CD14-positive monocyte (primary cell): ENCODE measurements at regions of chr1 and their contacts with region 1.

Region 1: DNA sequence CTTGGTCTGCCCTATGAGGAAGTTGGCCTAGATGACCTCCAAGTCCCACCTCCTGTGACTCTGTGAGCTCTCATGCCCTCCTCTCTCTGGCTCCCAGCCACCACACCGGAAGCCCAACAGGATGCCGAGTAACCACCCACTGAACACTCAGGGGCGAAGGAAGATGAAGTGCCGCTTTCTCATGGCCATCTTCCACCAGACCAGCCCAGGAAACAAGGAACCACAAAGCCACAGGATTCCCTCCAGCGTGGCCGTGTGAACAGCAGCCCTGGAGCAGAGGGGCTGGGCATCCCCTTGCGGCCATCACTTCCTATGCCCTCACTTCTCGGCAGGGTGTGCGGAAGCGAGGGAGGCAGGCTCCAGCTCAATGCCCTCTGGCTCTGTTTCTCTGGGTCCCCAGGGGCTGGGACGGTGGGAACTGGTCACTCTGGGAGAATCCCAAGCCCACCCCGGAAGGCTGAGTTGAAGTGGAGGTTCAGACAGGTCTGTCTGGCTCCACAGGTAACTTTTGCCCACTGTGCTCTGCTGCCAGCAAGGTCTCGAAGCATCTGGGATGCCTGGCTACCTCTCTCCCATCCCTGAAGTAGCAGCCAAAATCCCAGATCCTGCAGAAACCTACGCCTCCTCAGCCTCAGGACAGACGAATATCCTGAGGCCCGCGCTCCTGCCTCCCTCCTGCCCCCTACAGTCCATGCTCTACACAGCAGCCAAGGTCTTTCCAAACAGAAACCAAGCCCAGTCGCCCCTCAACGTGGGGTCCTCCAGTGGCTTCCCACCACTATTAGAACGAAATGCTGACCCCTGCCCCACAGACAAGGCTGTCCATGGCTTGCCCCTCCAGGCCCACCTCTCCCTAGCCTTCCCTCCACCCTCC is 44.2 kb upstream of the ECE1 start:
- DNase-seq: peak; percentile 97 to 99 (median 99)
- H3K4me3 ChIP-seq: peak overlapping the region; percentile 5 to 70 (median 35)
- H3K4me3 Mint-ChIP-seq: peak overlapping the region; percentile 84 to 88
- H3K27ac ChIP-seq: peak overlapping the region; percentile 88 to 90
- H3K27ac Mint-ChIP-seq: peak overlapping the region; percentile 96 to 100 (median 99)
- H3K4me1 ChIP-seq: peaks cover 77 to 82% of the 10 kb centered on the region in 2 donors
- H3K4me1 Mint-ChIP-seq: peaks cover 87% of the 10 kb centered on the region
- H3K27me3 ChIP-seq: peaks cover 0 to 20% of the 10 kb centered on the region in 2 donors
- H3K27me3 Mint-ChIP-seq: peaks cover 10 to 52% (median 50%) of the 10 kb centered on the region in 3 donors
- CTCF ChIP-seq: peak; percentile 85

Region 2: GRCh38 chr1:21318714-21319159 is 15.7 kb before region 1 on chr1:
- intact Hi-C with region 1: loop called in 1 of 2 experiments (anchors 2 kb)
- DNase-seq: no peak
- H3K4me3 ChIP-seq: no peak overlapping the region
- H3K4me3 Mint-ChIP-seq: no peak overlapping the region
- H3K27ac ChIP-seq: no peak overlapping the region
- H3K27ac Mint-ChIP-seq: peak overlapping the region in 4 of 7 donors; percentile 77 to 97 (median 96)
- H3K4me1 ChIP-seq: peaks cover 30 to 34% of the 10 kb centered on the region in 2 donors
- H3K4me1 Mint-ChIP-seq: peaks cover 45% of the 10 kb centered on the region
- H3K27me3 ChIP-seq: no peaks in the 10 kb centered on the region
- H3K27me3 Mint-ChIP-seq: peaks cover 7 to 22% (median 12%) of the 10 kb centered on the region in 3 donors
- CTCF ChIP-seq: no peak